AG04450 (cell line): ENCODE measurements at regions of chr5 and their contacts with region 1.

Region 1: DNA sequence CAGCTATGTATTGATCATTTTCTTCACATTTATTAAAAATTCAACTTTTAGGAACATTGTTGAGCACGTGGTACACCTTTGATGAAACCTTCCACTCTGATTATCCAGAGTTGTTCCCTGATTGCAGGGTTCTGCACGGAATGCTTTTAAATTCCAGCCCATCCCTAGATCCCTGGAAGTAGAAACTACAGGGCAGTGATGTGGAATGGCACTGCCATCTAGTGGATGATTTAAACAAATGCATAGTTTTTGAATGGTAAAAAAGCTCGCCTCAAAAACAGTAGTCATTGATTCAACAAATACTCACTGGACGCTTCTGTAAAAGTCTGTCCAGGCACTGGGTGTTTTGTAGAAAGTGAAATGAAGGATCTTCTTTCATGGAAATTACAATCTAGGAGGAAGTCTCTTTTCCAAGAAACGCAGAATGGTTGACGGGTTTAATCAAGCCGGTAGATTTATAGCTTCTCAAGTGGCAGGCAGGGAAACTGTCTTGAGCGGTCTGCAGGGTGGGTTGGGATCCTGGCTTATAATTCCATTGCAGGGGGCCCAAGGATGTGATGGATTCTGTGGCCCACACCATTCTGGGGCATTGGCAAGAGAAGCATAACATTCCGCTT is 118.4 kb downstream of the ARHGAP26 start:
- DNase-seq: no peak
- H3K4me3 ChIP-seq: no peak overlapping the region
- H3K27ac ChIP-seq: no peak overlapping the region
- H3K27me3 ChIP-seq: no peaks in the 10 kb centered on the region
- CTCF ChIP-seq: peak; percentile 75

Region 2: GRCh38 chr5:142186857-142187594 is 701.6 kb before region 1 on chr5:
- CTCF ChIA-PET with region 1: interaction called, 20 read pairs
- POLR2A ChIA-PET with region 1: no interaction called
- DNase-seq: no peak
- H3K4me3 ChIP-seq: no peak overlapping the region
- H3K27ac ChIP-seq: no peak overlapping the region
- H3K27me3 ChIP-seq: no peaks in the 10 kb centered on the region
- CTCF ChIP-seq: no peak

Region 3: GRCh38 chr5:142767178-142767577 is 121.4 kb before region 1 on chr5:
- CTCF ChIA-PET with region 1: no interaction called
- POLR2A ChIA-PET with region 1: no interaction called
- DNase-seq: no peak
- H3K4me3 ChIP-seq: no peak overlapping the region
- H3K27ac ChIP-seq: no peak overlapping the region
- H3K27me3 ChIP-seq: peaks cover 32% of the 10 kb centered on the region
- CTCF ChIP-seq: no peak

Region 4: DNA sequence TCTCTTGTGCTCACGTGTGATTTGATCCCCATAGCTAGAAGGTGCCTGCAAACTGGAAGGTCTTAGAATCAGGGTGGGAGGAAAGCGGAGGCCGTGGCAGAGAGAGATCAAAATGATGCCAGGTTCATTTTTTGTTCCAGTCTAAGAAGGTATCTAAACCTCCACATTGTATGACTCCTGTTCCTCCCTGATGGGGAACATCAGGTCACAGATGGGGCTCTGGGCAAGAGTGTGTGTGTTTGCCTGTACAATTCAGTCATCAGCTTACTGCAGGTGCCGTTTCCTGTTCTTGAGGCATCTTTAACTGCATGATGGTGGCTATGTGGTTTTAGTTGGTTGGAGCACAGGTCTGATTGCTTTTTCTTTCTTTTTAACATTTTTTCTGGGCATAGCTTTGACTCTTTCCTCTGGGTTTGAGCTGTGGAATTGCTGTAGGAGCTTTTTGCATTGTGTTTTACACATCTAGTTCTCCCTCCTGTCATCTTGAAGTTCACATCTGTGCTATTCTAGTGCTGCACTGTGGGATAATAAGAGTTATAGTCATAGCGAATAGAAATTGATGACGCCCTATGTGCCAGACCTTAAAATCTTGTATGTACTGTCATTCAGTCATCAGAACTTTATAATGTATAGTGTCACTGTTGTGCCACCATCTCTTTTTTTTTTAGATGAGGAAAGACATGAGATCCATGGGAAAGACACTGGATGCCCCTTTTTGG is 87.6 kb before region 1 on chr5:
- CTCF ChIA-PET with region 1: no interaction called
- POLR2A ChIA-PET with region 1: no interaction called
- DNase-seq: no peak
- H3K4me3 ChIP-seq: no peak overlapping the region
- H3K27ac ChIP-seq: no peak overlapping the region
- H3K27me3 ChIP-seq: peaks cover 33% of the 10 kb centered on the region
- CTCF ChIP-seq: no peak

Region 5: DNA sequence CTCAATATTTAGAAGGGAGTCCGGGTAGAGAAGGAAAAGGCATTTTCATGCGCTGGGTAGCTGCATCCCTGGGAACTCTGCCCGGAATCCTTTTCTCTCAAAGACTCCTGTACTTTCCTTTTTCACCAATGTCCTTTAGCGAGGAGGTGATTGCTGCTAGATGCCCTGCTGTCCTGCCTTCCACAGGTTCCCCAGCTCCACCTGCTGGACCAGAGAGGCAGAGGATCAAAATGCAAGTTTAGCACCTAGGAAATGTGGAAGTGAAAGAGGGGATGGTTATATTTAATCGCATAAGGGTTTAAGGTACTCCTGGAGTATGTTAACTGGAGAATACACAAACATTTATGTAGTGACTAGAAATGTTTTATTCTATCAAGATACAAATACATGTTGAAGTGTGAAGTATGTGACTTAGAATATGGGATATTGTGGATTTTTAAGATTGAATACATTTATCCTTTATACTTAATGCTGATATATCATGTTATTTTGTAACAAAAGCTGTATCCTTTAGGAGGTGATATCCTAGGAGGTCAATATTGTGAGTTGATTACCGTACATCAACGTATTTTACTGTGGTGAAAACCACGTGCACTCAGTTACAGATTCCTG is 27.3 kb after region 1 on chr5:
- CTCF ChIA-PET with region 1: interaction called, 19 read pairs
- POLR2A ChIA-PET with region 1: no interaction called
- DNase-seq: no peak
- H3K4me3 ChIP-seq: no peak overlapping the region
- H3K27ac ChIP-seq: no peak overlapping the region
- H3K27me3 ChIP-seq: no peaks in the 10 kb centered on the region
- CTCF ChIP-seq: peak; percentile 76

Region 6: GRCh38 chr5:143124593-143124992 is 236.0 kb after region 1 on chr5:
- CTCF ChIA-PET with region 1: no interaction called
- POLR2A ChIA-PET with region 1: no interaction called
- DNase-seq: no peak
- H3K4me3 ChIP-seq: no peak overlapping the region
- H3K27ac ChIP-seq: no peak overlapping the region
- H3K27me3 ChIP-seq: no peaks in the 10 kb centered on the region
- CTCF ChIP-seq: no peak